GM12878 (cell line): ENCODE measurements at regions of chr3 and their contacts with region 1.

Region 1: GRCh38 chr3:195616712-195617086 is 33.0 kb upstream of the APOD start:
- DNase-seq: no peak
- ATAC-seq: no peak
- H3K4me3 ChIP-seq: no peak overlapping the region
- H3K27ac ChIP-seq: no peak overlapping the region
- H3K4me1 ChIP-seq: no peaks in the 10 kb centered on the region
- H3K27me3 ChIP-seq: no peaks in the 10 kb centered on the region; a peak in 2 of 4 replicates
- CTCF ChIP-seq: no peak
- EP300 ChIP-seq: no peak
- POLR2A ChIP-seq: no peak
- RAD21 ChIP-seq: no peak

Region 2: GRCh38 chr3:195403852-195404408 is 212.8 kb before region 1 on chr3:
- CTCF ChIA-PET with region 1: no interaction called
- POLR2A ChIA-PET with region 1: no interaction called
- RAD21 ChIA-PET with region 1: no interaction called
- SMC1A ChIA-PET with region 1: no interaction called
- in situ Hi-C with region 1: no loop called
- intact Hi-C with region 1: no loop called
- DNase-seq: no peak
- ATAC-seq: no peak
- H3K4me3 ChIP-seq: no peak overlapping the region
- H3K27ac ChIP-seq: no peak overlapping the region
- H3K4me1 ChIP-seq: peaks cover 4% of the 10 kb centered on the region
- H3K27me3 ChIP-seq: no peaks in the 10 kb centered on the region
- CTCF ChIP-seq: no peak
- EP300 ChIP-seq: no peak
- POLR2A ChIP-seq: no peak
- RAD21 ChIP-seq: no peak

Region 3: GRCh38 chr3:195716865-195717210 is 100.1 kb after region 1 on chr3:
- CTCF ChIA-PET with region 1: no interaction called
- POLR2A ChIA-PET with region 1: no interaction called
- RAD21 ChIA-PET with region 1: no interaction called
- SMC1A ChIA-PET with region 1: no interaction called
- in situ Hi-C with region 1: no loop called
- intact Hi-C with region 1: loop called (anchors 5 kb)
- DNase-seq: no peak
- ATAC-seq: peak; percentile 25; the same call in 2 of the 3 replicates
- H3K4me3 ChIP-seq: no peak overlapping the region
- H3K27ac ChIP-seq: no peak overlapping the region
- H3K4me1 ChIP-seq: no peaks in the 10 kb centered on the region
- H3K27me3 ChIP-seq: no peaks in the 10 kb centered on the region
- CTCF ChIP-seq: no peak
- EP300 ChIP-seq: no peak
- POLR2A ChIP-seq: no peak
- RAD21 ChIP-seq: no peak

Region 4: DNA sequence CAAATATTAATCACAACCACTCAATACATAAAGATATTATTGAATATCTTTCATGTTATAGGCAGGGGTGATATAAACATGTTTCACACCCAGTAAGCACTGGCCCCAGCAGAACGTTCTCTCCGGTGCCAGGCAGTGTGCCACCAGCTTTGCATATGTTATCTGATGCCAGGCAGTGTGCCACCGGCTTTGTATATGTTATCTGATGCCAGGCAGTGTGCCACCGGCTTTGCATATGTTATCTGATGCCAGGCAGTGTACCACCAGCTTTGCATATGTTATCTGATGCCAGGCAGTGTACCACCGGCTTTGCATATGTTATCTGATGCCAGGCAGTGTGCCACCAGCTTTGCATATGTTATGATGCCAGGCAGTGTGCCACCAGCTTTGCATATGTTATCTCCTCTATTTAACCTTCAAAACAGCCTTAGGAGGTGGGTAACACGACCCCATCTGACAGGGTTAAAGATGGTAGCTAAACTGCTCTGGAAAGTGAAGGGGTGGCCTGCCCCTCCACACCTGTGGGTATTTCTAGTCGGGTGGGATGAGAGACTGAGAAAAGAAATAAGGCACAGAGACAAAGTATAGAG is 111.0 kb after region 1 on chr3:
- CTCF ChIA-PET with region 1: no interaction called
- POLR2A ChIA-PET with region 1: no interaction called
- RAD21 ChIA-PET with region 1: no interaction called
- SMC1A ChIA-PET with region 1: no interaction called
- in situ Hi-C with region 1: loop called (anchors 5 kb)
- intact Hi-C with region 1: no loop called
- DNase-seq: no peak
- ATAC-seq: no peak
- H3K4me3 ChIP-seq: no peak overlapping the region
- H3K27ac ChIP-seq: no peak overlapping the region
- H3K4me1 ChIP-seq: no peaks in the 10 kb centered on the region
- H3K27me3 ChIP-seq: no peaks in the 10 kb centered on the region
- CTCF ChIP-seq: no peak
- EP300 ChIP-seq: no peak
- POLR2A ChIP-seq: no peak
- RAD21 ChIP-seq: no peak

Region 5: DNA sequence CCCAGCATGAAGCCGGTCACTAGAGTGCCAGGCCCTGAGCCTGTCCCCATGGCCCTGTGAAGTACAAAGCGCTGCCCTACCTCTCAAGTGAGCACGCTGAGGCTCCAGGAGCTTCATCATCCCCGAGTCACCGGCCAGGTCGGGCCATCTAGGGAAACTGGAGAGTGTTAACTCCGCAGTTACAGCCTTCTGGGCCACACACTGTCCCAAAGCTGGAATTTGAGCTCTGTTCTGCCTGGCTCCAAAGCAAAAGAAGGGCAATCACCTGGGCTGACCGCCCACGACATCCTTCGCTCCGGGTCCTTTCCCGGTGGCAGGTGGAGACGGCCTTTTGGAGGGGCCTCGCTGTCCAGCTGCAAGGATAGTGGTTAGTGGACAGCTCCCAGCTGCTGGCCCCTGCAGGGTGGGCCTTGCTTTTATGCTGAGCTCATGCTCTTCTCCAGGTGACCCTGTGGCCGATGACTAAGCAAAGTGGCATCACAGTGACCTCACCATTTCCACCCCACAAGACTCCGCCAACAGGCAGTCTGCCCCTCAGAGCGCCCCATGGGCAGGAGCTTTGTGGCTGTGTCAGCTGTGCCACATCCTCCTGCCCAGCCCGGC is 198.6 kb after region 1 on chr3:
- CTCF ChIA-PET with region 1: no interaction called
- POLR2A ChIA-PET with region 1: no interaction called
- RAD21 ChIA-PET with region 1: no interaction called
- SMC1A ChIA-PET with region 1: no interaction called
- in situ Hi-C with region 1: no loop called
- intact Hi-C with region 1: no loop called
- DNase-seq: no peak
- ATAC-seq: no peak
- H3K4me3 ChIP-seq: no peak overlapping the region
- H3K27ac ChIP-seq: no peak overlapping the region
- H3K4me1 ChIP-seq: no peaks in the 10 kb centered on the region
- H3K27me3 ChIP-seq: no peaks in the 10 kb centered on the region; a peak in 1 of 4 replicates
- CTCF ChIP-seq: no peak
- EP300 ChIP-seq: no peak
- POLR2A ChIP-seq: no peak
- RAD21 ChIP-seq: no peak